ENCODE measurements at regions of chr13 and their contacts with region 1.

Region 1: GRCh38 chr13:48492470-48493065 is 40.3 kb downstream of the RCBTB2 start:
- DNase-seq: peak; percentile 68
- H3K4me3 Mint-ChIP-seq: no peak overlapping the region
- H3K27ac Mint-ChIP-seq: no peak overlapping the region
- H3K4me1 Mint-ChIP-seq: peaks cover 39% of the 10 kb centered on the region
- H3K27me3 Mint-ChIP-seq: no peaks in the 10 kb centered on the region

Region 2: GRCh38 chr13:48334534-48335127 is 157.9 kb before region 1 on chr13:
- intact Hi-C with region 1: loop called (anchors 5 kb)
- DNase-seq: no peak
- H3K4me3 Mint-ChIP-seq: no peak overlapping the region
- H3K27ac Mint-ChIP-seq: no peak overlapping the region
- H3K4me1 Mint-ChIP-seq: peaks cover 13% of the 10 kb centered on the region
- H3K27me3 Mint-ChIP-seq: no peaks in the 10 kb centered on the region

Region 3: DNA sequence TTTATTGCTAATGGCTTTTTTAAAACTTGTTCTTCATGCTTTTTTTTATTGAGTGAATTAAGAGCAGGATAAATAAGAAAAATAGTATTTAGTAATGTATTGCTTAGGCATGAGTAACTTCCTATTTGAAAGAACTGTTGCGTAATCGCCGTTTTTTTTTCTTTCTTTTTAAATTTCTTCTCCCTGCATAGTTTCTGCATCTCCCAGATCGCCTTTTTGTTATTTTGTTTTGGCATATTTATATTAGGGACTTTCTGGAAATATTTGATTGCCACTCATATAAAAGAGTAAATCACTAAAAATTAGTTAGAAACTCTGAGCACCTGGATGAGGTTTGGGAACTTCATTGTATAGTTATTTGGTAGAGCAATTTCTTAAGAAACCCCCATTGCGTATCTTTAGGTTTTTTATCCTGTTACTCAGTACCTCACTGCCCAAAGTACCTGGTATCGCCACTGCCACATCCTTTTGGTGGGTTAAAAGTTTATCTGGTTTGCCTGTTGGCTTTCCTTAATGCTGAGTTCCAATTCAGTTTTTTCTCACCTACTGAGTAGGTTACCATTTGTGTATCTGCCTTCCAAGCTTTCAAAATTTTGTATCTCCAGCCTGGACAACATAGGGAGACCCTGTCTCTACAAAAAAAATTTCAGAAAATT is 43.5 kb before region 1 on chr13:
- intact Hi-C with region 1: loop called (anchors 10 kb)
- DNase-seq: no peak
- H3K4me3 Mint-ChIP-seq: no peak overlapping the region
- H3K27ac Mint-ChIP-seq: no peak overlapping the region
- H3K4me1 Mint-ChIP-seq: peaks cover 27% of the 10 kb centered on the region
- H3K27me3 Mint-ChIP-seq: no peaks in the 10 kb centered on the region

Region 4: GRCh38 chr13:48532506-48533499 is 40.2 kb after region 1 on chr13 and contains the start of gene RCBTB2:
- intact Hi-C with region 1: loop called (anchors 1 kb)
- DNase-seq: peak; percentile 99
- H3K4me3 Mint-ChIP-seq: peak within 1 kb of the TSS; percentile 91
- H3K27ac Mint-ChIP-seq: peak within 1 kb of the TSS; percentile 98
- H3K4me1 Mint-ChIP-seq: peaks cover 32% of the 10 kb centered on the region
- H3K27me3 Mint-ChIP-seq: peaks cover 7% of the 10 kb centered on the region
- total RNA-seq, gene RCBTB2: 1.7 and 2.0 TPM in 2 replicates

Region 5: DNA sequence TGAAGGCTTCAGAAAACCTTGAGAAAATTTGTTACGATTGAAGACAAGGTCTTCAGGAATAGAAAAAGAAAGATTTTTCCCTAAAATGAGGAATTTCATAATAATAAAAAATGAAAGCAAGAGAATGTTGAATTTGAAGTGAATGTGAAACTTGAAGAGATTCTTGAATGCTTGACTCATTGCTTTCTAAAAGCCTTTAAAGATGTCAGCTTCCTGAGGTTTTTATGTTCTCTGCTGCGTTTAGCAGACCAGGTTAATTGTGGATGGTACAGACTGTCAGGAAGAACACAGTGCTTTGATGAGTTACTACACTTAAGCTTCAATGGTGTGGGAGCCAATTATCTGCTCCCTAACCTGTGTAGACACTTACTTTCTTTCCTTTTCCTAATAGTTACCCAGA is 386.9 kb after region 1 on chr13:
- intact Hi-C with region 1: loop called (anchors 2 kb)
- DNase-seq: no peak
- H3K4me3 Mint-ChIP-seq: peak overlapping the region; percentile 1
- H3K27ac Mint-ChIP-seq: peak overlapping the region; percentile 1
- H3K4me1 Mint-ChIP-seq: peaks cover 52% of the 10 kb centered on the region
- H3K27me3 Mint-ChIP-seq: peaks cover 6% of the 10 kb centered on the region

Measured in activated T-helper 1 cell treated with anti-CD3 and anti-CD28 coated beads, Interleukin-12 subunit alpha, Interleukin-12 subunit beta, Interleukin-2, Interleukin-4 antibody, amounts not matched to agents 30 ng/mL and 10 ng/mL and 1 ng/mL, durations not matched to agents 14 hours and 24 hours and 36 hours (primary cell).